GM12878 (cell line): ENCODE measurements at regions of chr13 and their contacts with region 1.

Region 1: DNA sequence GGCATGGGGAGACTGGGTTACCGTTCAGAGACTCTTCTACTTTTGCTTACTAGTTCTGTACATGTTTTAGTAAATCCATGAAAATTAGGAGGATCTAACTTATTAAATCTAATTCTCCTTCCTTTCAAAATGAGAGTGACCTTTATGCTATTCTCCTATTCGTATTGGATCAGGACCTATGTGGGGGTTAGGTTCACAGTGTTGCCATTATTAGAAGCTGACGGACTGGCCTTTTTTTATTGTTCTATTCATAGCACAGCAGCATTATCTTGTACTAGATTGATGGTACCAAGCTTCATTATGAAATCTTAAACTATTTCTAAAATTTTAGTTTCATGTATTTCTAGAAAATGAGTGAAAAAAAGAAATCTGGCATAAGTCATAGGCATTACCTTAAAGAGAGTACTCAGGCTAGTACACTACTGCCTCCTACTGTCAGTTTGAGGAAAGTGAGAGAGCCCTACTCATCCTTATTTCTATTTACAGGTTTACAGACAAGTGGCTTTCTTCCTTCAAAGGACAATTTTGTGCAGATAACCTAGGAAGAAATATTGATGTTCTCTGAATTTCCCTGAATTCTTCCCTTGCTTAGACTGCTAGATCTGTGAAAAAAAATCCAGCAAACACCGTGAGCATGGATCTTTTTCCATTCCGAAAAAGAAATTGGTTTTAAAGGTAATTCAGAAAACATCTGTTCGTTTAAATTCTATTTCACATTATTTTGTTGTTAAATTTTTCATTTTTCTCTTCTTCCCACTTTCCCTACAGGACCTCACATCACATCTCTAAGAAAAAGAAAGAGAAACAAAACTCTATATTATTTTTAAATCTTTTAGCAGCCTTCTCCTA is 485.5 kb downstream of the DIAPH3 start:
- DNase-seq: no peak
- ATAC-seq: peak; percentile 84
- H3K4me3 ChIP-seq: no peak overlapping the region
- H3K27ac ChIP-seq: no peak overlapping the region
- H3K4me1 ChIP-seq: no peaks in the 10 kb centered on the region
- H3K27me3 ChIP-seq: no peaks in the 10 kb centered on the region
- CTCF ChIP-seq: peak; percentile 62 to 75 (median 66)
- EP300 ChIP-seq: no peak
- POLR2A ChIP-seq: no peak
- RAD21 ChIP-seq: peak; percentile 85

Region 2: DNA sequence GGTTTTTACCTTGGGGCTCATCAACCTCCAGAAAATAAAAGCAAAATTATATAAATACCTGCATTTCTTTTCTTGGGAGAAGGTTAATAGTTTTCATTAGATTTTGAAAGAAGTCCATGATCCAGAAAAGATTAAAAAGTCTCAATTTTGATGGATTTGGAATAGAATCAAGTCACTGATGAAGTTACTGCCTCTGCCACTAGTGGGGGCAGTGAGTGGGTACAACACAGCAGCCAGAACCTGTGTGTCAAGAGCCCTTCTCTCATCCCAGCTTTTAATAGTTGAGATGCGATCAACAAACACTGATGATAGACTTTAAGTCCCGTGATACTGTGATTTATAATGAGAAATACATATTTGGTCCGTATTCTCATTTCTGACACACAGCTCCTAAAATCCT is 201.2 kb before region 1 on chr13:
- CTCF ChIA-PET with region 1: interaction called, 4 read pairs
- POLR2A ChIA-PET with region 1: no interaction called
- RAD21 ChIA-PET with region 1: interaction called, 7 read pairs
- SMC1A ChIA-PET with region 1: interaction called, 3 read pairs
- in situ Hi-C with region 1: no loop called
- intact Hi-C with region 1: loop called (anchors 2 kb)
- DNase-seq: no peak
- ATAC-seq: peak; percentile 54; the same call in 1 of the 3 replicates
- H3K4me3 ChIP-seq: no peak overlapping the region
- H3K27ac ChIP-seq: no peak overlapping the region
- H3K4me1 ChIP-seq: no peaks in the 10 kb centered on the region
- H3K27me3 ChIP-seq: no peaks in the 10 kb centered on the region
- CTCF ChIP-seq: peak in 2 of 3 experiments; percentile 35 to 49; a peak in 3 of 6 replicates
- EP300 ChIP-seq: no peak
- POLR2A ChIP-seq: no peak
- RAD21 ChIP-seq: no peak

Region 3: GRCh38 chr13:59690857-59691500 is 12.8 kb after region 1 on chr13:
- CTCF ChIA-PET with region 1: interaction called, 23 read pairs
- POLR2A ChIA-PET with region 1: no interaction called
- RAD21 ChIA-PET with region 1: interaction called, 5 read pairs
- SMC1A ChIA-PET with region 1: interaction called, 19 read pairs
- in situ Hi-C with region 1: no loop called
- intact Hi-C with region 1: no loop called
- DNase-seq: no peak
- ATAC-seq: peak; percentile 63
- H3K4me3 ChIP-seq: no peak overlapping the region
- H3K27ac ChIP-seq: no peak overlapping the region
- H3K4me1 ChIP-seq: no peaks in the 10 kb centered on the region
- H3K27me3 ChIP-seq: no peaks in the 10 kb centered on the region
- CTCF ChIP-seq: no peak
- EP300 ChIP-seq: no peak
- POLR2A ChIP-seq: no peak
- RAD21 ChIP-seq: no peak

Region 4: GRCh38 chr13:59771272-59771671 is 93.1 kb after region 1 on chr13:
- CTCF ChIA-PET with region 1: interaction called, 124 read pairs
- POLR2A ChIA-PET with region 1: no interaction called
- RAD21 ChIA-PET with region 1: interaction called, 48 read pairs
- SMC1A ChIA-PET with region 1: interaction called, 56 read pairs
- in situ Hi-C with region 1: no loop called
- intact Hi-C with region 1: loop called (anchors 2 kb)
- DNase-seq: no peak
- ATAC-seq: no peak
- H3K4me3 ChIP-seq: no peak overlapping the region
- H3K27ac ChIP-seq: no peak overlapping the region
- H3K4me1 ChIP-seq: no peaks in the 10 kb centered on the region
- H3K27me3 ChIP-seq: no peaks in the 10 kb centered on the region
- CTCF ChIP-seq: peak; percentile 39 to 54 (median 44); a peak in 5 of 6 replicates
- EP300 ChIP-seq: no peak
- POLR2A ChIP-seq: no peak
- RAD21 ChIP-seq: peak; percentile 61

Region 5: GRCh38 chr13:59906413-59907049 is 228.3 kb after region 1 on chr13:
- CTCF ChIA-PET with region 1: interaction called, 119 read pairs
- POLR2A ChIA-PET with region 1: no interaction called
- RAD21 ChIA-PET with region 1: interaction called, 55 read pairs
- SMC1A ChIA-PET with region 1: interaction called, 62 read pairs
- in situ Hi-C with region 1: loop called (anchors 5 kb)
- intact Hi-C with region 1: loop called (anchors 1 kb)
- DNase-seq: no peak
- ATAC-seq: peak; percentile 63
- H3K4me3 ChIP-seq: no peak overlapping the region
- H3K27ac ChIP-seq: no peak overlapping the region
- H3K4me1 ChIP-seq: no peaks in the 10 kb centered on the region
- H3K27me3 ChIP-seq: no peaks in the 10 kb centered on the region
- CTCF ChIP-seq: peak; percentile 56 to 62 (median 59)
- EP300 ChIP-seq: no peak
- POLR2A ChIP-seq: no peak
- RAD21 ChIP-seq: peak; percentile 77

Region 6: GRCh38 chr13:59970847-59971246 is 292.7 kb after region 1 on chr13:
- CTCF ChIA-PET with region 1: no interaction called
- POLR2A ChIA-PET with region 1: no interaction called
- RAD21 ChIA-PET with region 1: no interaction called
- SMC1A ChIA-PET with region 1: no interaction called
- in situ Hi-C with region 1: no loop called
- intact Hi-C with region 1: no loop called
- DNase-seq: no peak
- ATAC-seq: no peak
- H3K4me3 ChIP-seq: no peak overlapping the region
- H3K27ac ChIP-seq: no peak overlapping the region
- H3K4me1 ChIP-seq: no peaks in the 10 kb centered on the region
- H3K27me3 ChIP-seq: no peaks in the 10 kb centered on the region
- CTCF ChIP-seq: no peak
- EP300 ChIP-seq: no peak
- POLR2A ChIP-seq: no peak
- RAD21 ChIP-seq: no peak

Region 7: GRCh38 chr13:60329221-60329983 is 651.2 kb after region 1 on chr13:
- CTCF ChIA-PET with region 1: interaction called, 13 read pairs
- POLR2A ChIA-PET with region 1: no interaction called
- RAD21 ChIA-PET with region 1: interaction called, 20 read pairs
- SMC1A ChIA-PET with region 1: interaction called, 7 read pairs
- in situ Hi-C with region 1: no loop called
- intact Hi-C with region 1: loop called (anchors 5 kb)
- DNase-seq: peak; percentile 7
- ATAC-seq: peak; percentile 89
- H3K4me3 ChIP-seq: no peak overlapping the region
- H3K27ac ChIP-seq: no peak overlapping the region
- H3K4me1 ChIP-seq: no peaks in the 10 kb centered on the region
- H3K27me3 ChIP-seq: no peaks in the 10 kb centered on the region
- CTCF ChIP-seq: peak; percentile 43 to 59 (median 57); a peak in 5 of 6 replicates
- EP300 ChIP-seq: no peak
- POLR2A ChIP-seq: no peak
- RAD21 ChIP-seq: peak; percentile 84

Region 8: GRCh38 chr13:60431108-60431700 is 753.0 kb after region 1 on chr13:
- CTCF ChIA-PET with region 1: interaction called, 96 read pairs
- POLR2A ChIA-PET with region 1: no interaction called
- RAD21 ChIA-PET with region 1: interaction called, 48 read pairs
- SMC1A ChIA-PET with region 1: interaction called, 29 read pairs
- in situ Hi-C with region 1: loop called (anchors 5 kb)
- intact Hi-C with region 1: loop called (anchors 1 kb)
- DNase-seq: peak; percentile 61
- ATAC-seq: peak; percentile 68
- H3K4me3 ChIP-seq: no peak overlapping the region
- H3K27ac ChIP-seq: no peak overlapping the region
- H3K4me1 ChIP-seq: peaks cover 12% of the 10 kb centered on the region
- H3K27me3 ChIP-seq: no peaks in the 10 kb centered on the region
- CTCF ChIP-seq: peak; percentile 87 to 93 (median 88); a peak in 5 of 6 replicates
- EP300 ChIP-seq: no peak
- POLR2A ChIP-seq: no peak
- RAD21 ChIP-seq: peak; percentile 98